Heart left ventricle (tissue), 16 donors: ENCODE measurements at regions of chrX and their contacts with region 1.

Region 1: GRCh38 chrX:15188039-15188438 is 81.8 kb downstream of the ASB9 start:
- DNase-seq: no peak
- ATAC-seq: no peak
- H3K4me3 ChIP-seq: no peak overlapping the region
- H3K27ac ChIP-seq: no peak overlapping the region
- H3K4me1 ChIP-seq: no peaks in the 10 kb centered on the region
- H3K27me3 ChIP-seq: peaks cover 0 to 33% (median 0%) of the 10 kb centered on the region in 9 donors
- CTCF ChIP-seq: no peak
- POLR2A ChIP-seq: no peak

Region 2: GRCh38 chrX:15170927-15171326 is 17.1 kb before region 1 on chrX:
- intact Hi-C with region 1: loop called in 1 of 10 experiments (anchors 2 kb)
- DNase-seq: no peak
- ATAC-seq: no peak
- H3K4me3 ChIP-seq: no peak overlapping the region
- H3K27ac ChIP-seq: no peak overlapping the region
- H3K4me1 ChIP-seq: no peaks in the 10 kb centered on the region
- H3K27me3 ChIP-seq: peaks cover 0 to 4% (median 0%) of the 10 kb centered on the region in 9 donors
- CTCF ChIP-seq: no peak
- POLR2A ChIP-seq: no peak

Region 3: DNA sequence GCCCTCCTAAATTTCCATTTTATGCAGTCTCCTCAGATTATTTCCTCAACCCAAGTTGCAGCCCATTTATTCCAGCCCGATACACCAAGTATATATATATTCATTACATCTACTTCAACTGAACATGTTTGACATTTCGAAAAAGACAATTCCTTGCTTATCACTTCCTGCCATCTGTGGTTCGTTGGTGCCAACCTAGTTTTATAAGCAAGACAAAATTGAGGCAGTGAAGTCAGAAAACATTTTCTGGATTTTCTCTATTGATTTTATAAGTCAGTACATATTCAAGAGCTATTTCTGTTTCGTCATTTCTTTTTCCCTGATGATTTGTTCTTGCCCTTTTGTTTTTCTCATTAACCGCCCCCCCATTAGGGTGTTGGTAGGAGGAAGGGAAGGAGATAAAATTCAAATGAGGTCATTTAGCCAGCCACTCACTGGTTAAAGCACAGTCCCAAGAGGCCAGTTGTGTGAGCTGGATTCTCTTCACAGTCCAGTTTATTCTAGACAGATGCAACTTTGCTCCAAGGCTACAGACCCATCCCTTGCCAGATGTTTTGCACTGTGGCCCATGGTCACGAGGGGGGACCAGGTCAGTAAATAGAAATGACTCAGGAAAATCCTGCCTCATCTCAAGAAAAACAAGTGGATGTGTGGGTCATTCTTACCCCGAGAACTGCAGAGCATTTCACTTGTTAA is 216.5 kb after region 1 on chrX:
- intact Hi-C with region 1: no loop called
- DNase-seq: peak in 4 of 5 donors; percentile 45 to 70 (median 68)
- ATAC-seq: peak; percentile 77 to 96 (median 86)
- H3K4me3 ChIP-seq: no peak overlapping the region
- H3K27ac ChIP-seq: peak overlapping the region in 8 of 12 donors; percentile 22 to 69 (median 47)
- H3K4me1 ChIP-seq: peaks cover 0 to 25% (median 2%) of the 10 kb centered on the region in 12 donors
- H3K27me3 ChIP-seq: peaks cover 0 to 14% (median 0%) of the 10 kb centered on the region in 9 donors
- CTCF ChIP-seq: no peak
- POLR2A ChIP-seq: no peak